HEK293T (cell line): ENCODE measurements at regions of chr17 and their contacts with region 1.

Region 1: DNA sequence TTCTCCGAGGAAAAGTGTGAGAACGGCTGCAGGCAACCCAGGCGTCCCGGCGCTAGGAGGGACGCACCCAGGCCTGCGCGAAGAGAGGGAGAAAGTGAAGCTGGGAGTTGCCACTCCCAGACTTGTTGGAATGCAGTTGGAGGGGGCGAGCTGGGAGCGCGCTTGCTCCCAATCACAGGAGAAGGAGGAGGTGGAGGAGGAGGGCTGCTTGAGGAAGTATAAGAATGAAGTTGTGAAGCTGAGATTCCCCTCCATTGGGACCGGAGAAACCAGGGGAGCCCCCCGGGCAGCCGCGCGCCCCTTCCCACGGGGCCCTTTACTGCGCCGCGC is at the start of gene ERBB2:
- DNase-seq: peak; percentile 60

Region 2: GRCh38 chr17:39710002-39710964 is 10.5 kb after region 1 on chr17:
- CTCF ChIA-PET with region 1: interaction called, 3 read pairs
- POLR2A ChIA-PET with region 1: interaction called, 15 read pairs
- DNase-seq: no peak

Region 3: DNA sequence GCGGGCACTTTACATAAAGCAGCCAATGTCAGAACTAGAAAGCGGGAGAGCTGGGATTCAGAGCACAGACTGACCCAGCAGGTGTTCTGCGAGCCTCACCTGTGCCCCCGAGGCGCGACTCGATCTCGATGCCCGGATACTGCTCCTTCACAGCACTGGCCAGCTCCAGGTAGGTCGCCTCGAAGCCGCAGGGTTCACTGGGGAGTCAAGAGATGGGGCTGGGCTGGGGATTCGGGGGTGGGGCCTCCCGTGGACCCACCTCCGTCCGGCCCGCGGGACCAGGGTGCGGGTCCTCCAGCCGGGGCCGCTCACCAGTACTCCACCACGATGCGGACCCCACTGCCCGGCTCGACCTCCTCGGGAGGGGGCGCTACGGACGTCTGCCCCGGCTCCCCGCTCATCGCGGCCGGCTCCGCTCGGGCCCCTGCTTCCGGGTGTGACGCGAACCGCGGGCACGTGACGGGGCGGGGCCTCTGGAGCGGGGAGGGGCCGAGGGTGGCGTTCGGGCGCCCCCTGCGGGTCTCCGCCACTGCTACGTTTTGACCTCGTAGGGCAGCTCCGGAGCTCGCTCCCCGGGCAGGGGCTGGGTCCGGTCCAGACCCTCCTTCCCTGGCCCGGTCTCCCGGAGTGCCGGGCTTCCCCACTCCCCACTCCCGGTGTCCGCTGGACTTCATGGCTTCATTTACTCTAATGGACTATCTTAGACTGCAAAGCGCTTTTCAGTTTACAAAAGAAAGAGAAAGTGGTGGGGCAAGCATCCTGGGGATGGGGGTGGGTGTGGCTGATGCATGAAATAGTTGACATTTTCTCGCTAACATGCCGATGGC is 30.5 kb after region 1 on chr17 and contains the start of gene MIEN1:
- CTCF ChIA-PET with region 1: interaction called, 8 read pairs
- POLR2A ChIA-PET with region 1: interaction called, 18 read pairs
- DNase-seq: peak; percentile 93